BJ (cell line): ENCODE measurements at regions of chr3 and their contacts with region 1.

Region 1: GRCh38 chr3:40901305-40901704 is 298.0 kb upstream of the CTNNB1 start:
- DNase-seq: no peak
- H3K4me3 ChIP-seq: no peak overlapping the region
- H3K27me3 ChIP-seq: no peaks in the 10 kb centered on the region
- CTCF ChIP-seq: no peak

Region 2: DNA sequence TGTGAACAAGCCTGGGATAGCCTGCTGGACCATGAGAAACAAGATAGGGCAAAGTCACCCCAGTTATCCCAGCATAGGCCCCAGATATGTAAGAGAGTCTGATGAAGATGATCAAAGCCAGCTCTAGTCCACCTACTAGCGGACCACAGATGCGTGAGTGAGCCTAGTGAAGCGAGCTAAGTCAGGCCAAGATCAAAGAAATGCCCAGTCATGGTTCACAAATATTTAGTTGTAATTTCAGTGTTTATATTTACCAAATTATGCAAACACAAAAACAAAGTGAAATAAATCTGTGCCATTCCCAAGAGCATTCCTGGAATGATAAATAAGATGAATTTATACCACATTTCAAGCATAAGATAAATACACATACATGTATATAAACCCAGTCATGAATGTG is 10.1 kb before region 1 on chr3:
- CTCF ChIA-PET with region 1: interaction called, 6 read pairs
- POLR2A ChIA-PET with region 1: interaction called, 28 read pairs
- DNase-seq: no peak
- H3K4me3 ChIP-seq: no peak overlapping the region
- H3K27me3 ChIP-seq: no peaks in the 10 kb centered on the region
- CTCF ChIP-seq: no peak

Region 3: GRCh38 chr3:40911928-40912327 is 10.6 kb after region 1 on chr3:
- CTCF ChIA-PET with region 1: no interaction called
- POLR2A ChIA-PET with region 1: no interaction called
- DNase-seq: no peak
- H3K4me3 ChIP-seq: no peak overlapping the region
- H3K27me3 ChIP-seq: no peaks in the 10 kb centered on the region
- CTCF ChIP-seq: no peak